Heart left ventricle (tissue), 16 donors: ENCODE measurements at regions of chr2 and their contacts with region 1.

Region 1: DNA sequence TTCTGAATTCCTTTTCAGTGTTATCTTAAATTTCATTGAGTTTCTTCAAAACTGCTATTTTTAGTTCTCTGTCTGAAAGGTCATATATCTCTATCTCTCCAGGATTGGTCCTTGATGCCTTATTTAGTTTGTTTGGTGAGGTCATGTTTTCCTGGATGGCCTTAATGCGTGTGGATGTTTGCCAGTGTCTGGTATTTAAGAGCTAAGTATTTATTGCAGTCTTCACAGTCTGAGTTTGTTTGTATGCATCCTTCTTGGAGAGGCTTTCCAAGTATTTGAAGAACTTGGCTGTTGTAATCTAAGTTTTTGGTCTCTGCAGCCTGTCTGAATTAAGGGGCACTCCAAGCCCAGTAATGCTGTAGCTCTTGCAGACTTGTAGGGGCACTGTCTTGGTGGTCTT is 249.3 kb downstream of the ZNF385B start:
- DNase-seq: no peak
- ATAC-seq: no peak
- H3K4me3 ChIP-seq: no peak overlapping the region
- H3K27ac ChIP-seq: no peak overlapping the region
- H3K4me1 ChIP-seq: peaks cover 0 to 5% (median 0%) of the 10 kb centered on the region in 12 donors
- H3K27me3 ChIP-seq: no peaks in the 10 kb centered on the region
- CTCF ChIP-seq: no peak
- POLR2A ChIP-seq: no peak

Region 2: DNA sequence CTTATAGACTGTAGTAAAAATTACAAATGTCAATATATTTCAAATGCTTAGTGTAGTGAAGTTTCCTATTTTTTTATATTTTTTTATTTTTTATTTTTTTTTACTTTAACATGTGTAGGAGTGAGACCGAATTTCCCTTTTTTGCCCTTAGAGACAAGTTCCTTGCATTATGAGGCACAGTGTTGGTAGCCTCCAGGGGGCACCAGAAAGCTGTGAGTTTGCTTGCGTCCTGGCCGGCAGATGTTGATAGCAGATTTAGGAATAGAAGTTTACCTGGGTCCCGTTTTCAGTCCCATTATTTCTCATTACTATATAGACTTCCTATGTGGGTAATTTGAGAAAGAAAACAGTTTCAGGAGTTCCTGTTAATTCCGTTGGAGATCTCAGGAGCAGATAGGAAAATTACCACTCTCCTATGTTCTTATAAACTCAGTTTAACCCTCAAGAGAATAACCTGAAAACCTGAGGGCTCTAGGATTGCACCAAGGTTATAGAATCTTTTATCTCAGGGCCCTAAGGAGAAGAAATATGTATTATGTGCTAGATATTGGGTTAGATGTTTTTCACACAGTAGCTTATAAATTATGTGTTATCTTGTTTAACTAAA is 190.0 kb before region 1 on chr2:
- intact Hi-C with region 1: loop called in 1 of 10 experiments (anchors 10 kb)
- DNase-seq: peak; percentile 40 to 72 (median 60)
- ATAC-seq: peak in 2 of 4 donors; percentile 52 to 73
- H3K4me3 ChIP-seq: no peak overlapping the region
- H3K27ac ChIP-seq: no peak overlapping the region
- H3K4me1 ChIP-seq: no peaks in the 10 kb centered on the region
- H3K27me3 ChIP-seq: peaks cover 0 to 8% (median 0%) of the 10 kb centered on the region in 9 donors
- CTCF ChIP-seq: peak; percentile 46 to 77 (median 68)
- POLR2A ChIP-seq: no peak

Region 3: GRCh38 chr2:179898873-179899272 is 286.8 kb after region 1 on chr2:
- intact Hi-C with region 1: no loop called
- DNase-seq: no peak
- ATAC-seq: no peak
- H3K4me3 ChIP-seq: no peak overlapping the region
- H3K27ac ChIP-seq: no peak overlapping the region
- H3K4me1 ChIP-seq: no peaks in the 10 kb centered on the region
- H3K27me3 ChIP-seq: peaks cover 0 to 4% (median 0%) of the 10 kb centered on the region in 9 donors
- CTCF ChIP-seq: no peak
- POLR2A ChIP-seq: no peak